ENCODE measurements at regions of chr10 and their contacts with region 1.

Region 1: GRCh38 chr10:63083904-63084689 is 49.0 kb upstream of the NRBF2 start:
- DNase-seq: peak; percentile 67
- H3K4me3 ChIP-seq: no peak overlapping the region
- H3K27ac ChIP-seq: no peak overlapping the region
- H3K4me1 ChIP-seq: no peaks in the 10 kb centered on the region
- H3K27me3 ChIP-seq: no peaks in the 10 kb centered on the region
- CTCF ChIP-seq: peak; percentile 31 to 46
- POLR2A ChIP-seq: no peak

Region 2: GRCh38 chr10:62492012-62492869 is 591.9 kb before region 1 on chr10:
- CTCF ChIA-PET with region 1: interaction called, 22 read pairs
- POLR2A ChIA-PET with region 1: no interaction called
- dilution Hi-C with region 1: no loop called
- intact Hi-C with region 1: loop called (anchors 1 kb)
- DNase-seq: peak; percentile 6
- H3K4me3 ChIP-seq: no peak overlapping the region
- H3K27ac ChIP-seq: no peak overlapping the region
- H3K4me1 ChIP-seq: no peaks in the 10 kb centered on the region
- H3K27me3 ChIP-seq: no peaks in the 10 kb centered on the region
- CTCF ChIP-seq: peak in 1 of 2 donors; percentile 30
- POLR2A ChIP-seq: no peak

Region 3: DNA sequence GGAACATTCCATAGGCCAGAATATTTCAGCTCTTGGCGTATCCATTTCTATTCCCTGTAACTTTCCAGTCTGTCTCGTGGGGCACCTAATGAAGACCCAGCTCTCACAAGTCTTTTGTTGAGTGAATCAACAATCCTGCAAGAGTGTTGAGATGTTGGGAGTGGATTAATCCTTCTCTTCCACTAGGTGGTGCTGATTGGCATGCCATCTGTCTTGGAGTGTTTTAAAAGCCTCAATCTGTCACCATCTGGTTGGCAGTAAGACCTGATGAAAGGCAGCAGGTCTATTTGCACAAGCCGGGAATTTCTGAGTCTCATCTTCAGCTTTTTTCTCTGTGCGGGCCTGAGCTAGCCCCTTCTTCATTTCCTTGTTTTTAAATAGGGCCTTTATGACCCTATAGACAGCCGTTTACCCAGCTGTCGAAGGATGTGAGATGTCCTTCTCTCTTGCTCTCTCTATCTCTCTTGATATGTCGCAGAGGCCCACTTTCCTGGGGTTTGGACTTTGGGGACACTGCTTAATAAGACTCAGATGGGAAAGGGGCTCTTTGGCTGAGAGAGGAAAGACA is 529.4 kb before region 1 on chr10:
- CTCF ChIA-PET with region 1: interaction called, 8 read pairs
- POLR2A ChIA-PET with region 1: no interaction called
- dilution Hi-C with region 1: no loop called
- intact Hi-C with region 1: loop called (anchors 2 kb)
- DNase-seq: peak; percentile 13
- H3K4me3 ChIP-seq: no peak overlapping the region
- H3K27ac ChIP-seq: no peak overlapping the region
- H3K4me1 ChIP-seq: no peaks in the 10 kb centered on the region
- H3K27me3 ChIP-seq: no peaks in the 10 kb centered on the region
- CTCF ChIP-seq: peak; percentile 35 to 39
- POLR2A ChIP-seq: no peak

Region 4: GRCh38 chr10:62594093-62594520 is 490.0 kb before region 1 on chr10:
- CTCF ChIA-PET with region 1: interaction called, 50 read pairs
- POLR2A ChIA-PET with region 1: no interaction called
- dilution Hi-C with region 1: no loop called
- intact Hi-C with region 1: loop called (anchors 5 kb)
- DNase-seq: peak; percentile 51
- H3K4me3 ChIP-seq: no peak overlapping the region
- H3K27ac ChIP-seq: no peak overlapping the region
- H3K4me1 ChIP-seq: peaks cover 7% of the 10 kb centered on the region
- H3K27me3 ChIP-seq: peaks cover 0 to 2% of the 10 kb centered on the region in 2 experiments
- CTCF ChIP-seq: peak; percentile 74 to 81
- POLR2A ChIP-seq: no peak

Region 5: DNA sequence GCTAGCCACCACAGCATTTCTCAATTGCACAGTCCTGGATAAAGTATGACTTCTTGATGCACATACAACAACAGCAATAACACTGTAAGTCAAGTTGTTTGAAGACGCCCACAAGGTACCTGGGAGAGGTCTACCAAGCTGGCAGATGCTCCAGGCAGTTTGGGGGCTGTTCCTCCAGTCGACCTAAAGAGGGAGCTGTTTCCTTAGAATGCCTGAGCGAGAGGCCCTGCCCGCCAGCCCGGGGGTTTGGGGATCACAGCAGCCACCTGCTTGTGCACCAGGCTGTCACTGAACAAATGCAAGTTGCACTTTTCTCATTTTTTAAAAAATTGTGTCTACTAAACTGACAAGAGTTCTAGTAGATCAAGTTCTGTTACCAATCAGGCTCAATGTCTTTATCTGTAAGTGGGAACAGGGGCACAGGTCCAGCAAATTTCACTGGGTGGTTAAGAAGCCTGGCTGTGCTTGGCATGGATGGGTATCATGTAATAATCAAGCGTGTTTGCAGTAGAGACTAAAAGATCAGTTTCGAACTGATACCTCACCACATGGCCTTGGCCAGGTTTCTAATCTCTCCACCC is 473.4 kb before region 1 on chr10:
- CTCF ChIA-PET with region 1: interaction called, 64 read pairs
- POLR2A ChIA-PET with region 1: no interaction called
- dilution Hi-C with region 1: no loop called
- intact Hi-C with region 1: loop called (anchors 2 kb)
- DNase-seq: peak; percentile 41
- H3K4me3 ChIP-seq: no peak overlapping the region
- H3K27ac ChIP-seq: no peak overlapping the region
- H3K4me1 ChIP-seq: no peaks in the 10 kb centered on the region
- H3K27me3 ChIP-seq: peaks cover 2 to 5% of the 10 kb centered on the region in 2 experiments
- CTCF ChIP-seq: peak; percentile 56 to 82
- POLR2A ChIP-seq: no peak

Measured in endothelial cell of umbilical vein (primary cell).